ENCODE measurements at regions of chr14 and their contacts with region 1.

Region 1: GRCh38 chr14:65302571-65303189 is 109.8 kb upstream of the FUT8 start:
- DNase-seq: peak; percentile 24
- H3K4me3 Mint-ChIP-seq: peak overlapping the region; percentile 53
- H3K27ac Mint-ChIP-seq: peak overlapping the region; percentile 94
- H3K4me1 Mint-ChIP-seq: peaks cover 63% of the 10 kb centered on the region
- H3K27me3 Mint-ChIP-seq: no peaks in the 10 kb centered on the region

Region 2: DNA sequence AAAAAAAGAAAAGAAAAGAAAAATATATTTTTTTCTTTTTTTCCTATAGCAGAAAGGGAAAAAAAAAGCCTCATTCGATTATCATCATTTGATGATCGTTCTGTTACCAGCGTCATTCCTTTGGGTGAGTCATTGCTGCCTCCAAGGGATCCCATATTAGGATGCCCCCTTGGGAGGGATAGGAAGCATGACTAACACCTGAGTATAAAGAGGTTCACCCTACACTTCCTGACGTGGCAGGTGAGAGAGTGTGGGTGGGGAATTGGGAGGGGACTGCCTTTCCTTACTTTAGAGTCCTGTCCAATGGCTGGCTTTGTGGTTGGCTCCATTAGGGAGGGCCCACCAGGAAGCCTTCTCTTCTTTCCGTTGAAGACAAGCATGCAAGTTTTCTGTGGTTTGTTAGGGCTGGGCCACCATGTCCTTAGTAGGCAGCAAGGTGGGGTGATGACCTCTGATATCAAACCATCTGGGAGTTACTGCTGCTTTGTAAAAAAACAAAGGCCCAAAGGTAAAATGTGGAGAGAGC is 53.7 kb after region 1 on chr14:
- intact Hi-C with region 1: loop called (anchors 5 kb)
- DNase-seq: peak; percentile 47
- H3K4me3 Mint-ChIP-seq: peak overlapping the region; percentile 20
- H3K27ac Mint-ChIP-seq: peak overlapping the region; percentile 74
- H3K4me1 Mint-ChIP-seq: peaks cover 48% of the 10 kb centered on the region
- H3K27me3 Mint-ChIP-seq: no peaks in the 10 kb centered on the region

Region 3: DNA sequence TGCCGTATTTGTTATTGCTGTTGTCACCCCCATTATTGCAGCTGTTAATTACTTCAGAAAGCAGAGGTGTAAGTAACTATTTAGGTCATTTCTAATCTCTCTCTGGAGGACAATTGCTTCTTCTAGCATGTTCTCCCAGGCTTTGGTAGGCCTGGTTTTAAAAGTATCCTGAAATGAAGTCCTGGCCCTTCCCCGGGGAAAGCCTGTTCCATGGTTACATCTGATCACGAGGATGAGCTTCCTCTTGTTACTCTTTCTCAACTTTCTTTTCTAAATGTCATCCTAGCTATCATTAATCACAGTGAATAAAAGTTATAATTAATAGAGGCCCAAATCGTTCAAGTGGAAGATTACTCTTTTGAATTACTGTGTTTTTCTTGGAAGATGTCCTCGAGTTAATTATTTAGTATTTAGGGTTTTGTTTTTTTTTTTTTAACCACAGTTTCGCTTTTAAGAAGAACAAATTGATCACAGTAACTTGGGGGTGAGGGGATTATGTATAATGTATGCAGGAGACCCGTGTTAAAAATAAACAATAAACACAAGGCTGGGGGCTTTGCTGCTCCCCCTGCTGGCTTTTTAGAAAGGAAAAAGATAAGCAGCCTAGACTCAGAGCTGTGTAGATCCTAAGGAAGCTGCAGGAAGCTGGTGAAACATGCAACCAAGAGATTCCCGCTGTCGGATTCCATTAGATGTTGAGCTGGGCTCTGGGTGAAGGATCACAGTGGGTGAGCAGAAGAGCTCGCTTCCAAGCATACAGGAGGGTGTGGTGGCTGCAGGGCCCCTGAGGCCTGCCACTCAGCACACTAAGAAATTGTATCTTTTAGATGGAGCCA is 530.0 kb after region 1 on chr14:
- intact Hi-C with region 1: no loop called
- DNase-seq: no peak
- H3K4me3 Mint-ChIP-seq: no peak overlapping the region
- H3K27ac Mint-ChIP-seq: no peak overlapping the region
- H3K4me1 Mint-ChIP-seq: peaks cover 26% of the 10 kb centered on the region
- H3K27me3 Mint-ChIP-seq: peaks cover 9% of the 10 kb centered on the region

Measured in activated T-helper 2 cell treated with anti-CD3 and anti-CD28 coated beads, Interferon-gamma antibody, Interleukin-2, Interleukin-4, amounts not matched to agents 10 μg/mL and 5 μg/mL and 100 μg/mL, durations not matched to agents 14 hours and 24 hours and 36 hours (primary cell).